ENCODE measurements at regions of chr16 and their contacts with region 1.

Region 1: DNA sequence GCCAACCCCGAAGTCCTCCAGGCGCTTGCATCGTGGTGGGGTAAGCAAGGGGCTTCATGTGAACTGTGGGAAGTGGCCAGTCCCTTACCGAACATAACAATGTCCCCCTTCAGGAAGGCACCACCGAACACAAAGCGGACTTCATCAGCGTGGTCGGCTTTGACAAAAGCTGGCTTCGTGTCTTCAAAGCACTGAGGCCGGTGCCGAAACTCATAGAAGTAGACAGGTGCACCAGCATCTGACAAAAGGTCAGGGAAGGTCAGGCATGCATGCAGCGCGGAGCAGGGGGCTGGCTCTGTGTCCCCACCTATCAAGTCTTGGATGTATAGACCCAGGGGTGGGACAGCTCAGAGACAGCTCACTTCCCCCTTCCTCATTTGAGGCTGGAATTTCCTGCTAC is 16.6 kb upstream of the CES1 start:
- DNase-seq: no peak
- ATAC-seq: no peak
- H3K4me3 ChIP-seq: no peak overlapping the region
- H3K27ac ChIP-seq: no peak overlapping the region
- H3K4me1 ChIP-seq: no peaks in the 10 kb centered on the region
- H3K27me3 ChIP-seq: no peaks in the 10 kb centered on the region
- CTCF ChIP-seq: no peak

Region 2: DNA sequence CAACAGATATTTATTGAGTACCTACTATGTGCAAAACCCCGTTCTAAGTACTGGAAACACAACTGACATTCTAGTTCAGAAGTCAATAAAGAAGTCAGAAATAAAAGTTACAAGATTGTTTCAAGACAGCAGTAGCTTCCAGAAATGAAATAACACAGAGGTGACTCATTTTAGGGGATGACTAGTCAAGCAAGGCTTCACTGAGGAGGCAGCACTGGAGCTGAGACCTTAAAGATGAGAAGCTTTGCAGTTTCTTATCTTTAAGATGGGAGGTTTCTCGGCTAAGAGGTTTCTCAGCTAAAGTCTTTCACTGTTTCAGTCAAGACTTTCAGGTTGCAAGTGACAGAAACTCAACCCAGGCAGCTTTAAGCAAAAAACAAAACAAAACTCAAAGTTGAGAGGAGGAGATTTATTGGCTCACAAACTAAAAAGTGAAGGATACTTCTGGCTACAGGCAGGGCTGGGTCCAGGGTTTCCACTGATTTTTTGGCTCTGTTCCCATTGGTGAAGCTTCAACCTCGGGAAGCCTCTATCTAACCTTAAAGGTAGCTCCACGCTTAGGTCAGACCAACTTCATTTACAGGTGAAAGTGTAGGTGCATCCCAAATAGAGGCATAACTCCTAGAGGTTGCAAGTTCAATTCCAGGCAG is 378.0 kb before region 1 on chr16:
- CTCF ChIA-PET with region 1: no interaction called
- POLR2A ChIA-PET with region 1: no interaction called
- in situ Hi-C with region 1: no loop called
- intact Hi-C with region 1: loop called (anchors 5 kb)
- DNase-seq: no peak
- ATAC-seq: peak; percentile 70
- H3K4me3 ChIP-seq: no peak overlapping the region
- H3K27ac ChIP-seq: peak overlapping the region; percentile 91
- H3K4me1 ChIP-seq: peaks cover 45% of the 10 kb centered on the region
- H3K27me3 ChIP-seq: no peaks in the 10 kb centered on the region
- CTCF ChIP-seq: no peak

Region 3: DNA sequence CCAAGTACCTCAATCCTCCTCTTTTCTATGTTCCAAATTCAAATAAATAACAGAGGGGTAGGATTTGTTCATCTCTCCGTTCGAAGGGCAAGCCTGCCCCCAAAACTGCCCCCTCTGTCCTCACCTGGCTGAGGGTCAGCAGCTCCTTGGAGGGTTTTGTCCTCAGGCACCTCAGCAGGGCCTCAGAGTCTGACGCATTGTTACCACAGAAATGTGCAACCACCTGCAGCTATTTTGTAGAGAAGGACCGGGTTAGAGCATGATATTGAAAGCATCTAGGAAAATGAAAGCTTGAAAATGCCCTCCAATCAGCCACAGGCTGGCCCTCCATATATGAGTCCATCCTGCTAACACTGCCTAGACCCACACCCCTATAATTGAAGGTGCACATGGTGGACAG is 11.8 kb after region 1 on chr16:
- CTCF ChIA-PET with region 1: no interaction called
- POLR2A ChIA-PET with region 1: no interaction called
- in situ Hi-C with region 1: no loop called
- intact Hi-C with region 1: no loop called
- DNase-seq: no peak
- ATAC-seq: no peak
- H3K4me3 ChIP-seq: no peak overlapping the region
- H3K27ac ChIP-seq: no peak overlapping the region
- H3K4me1 ChIP-seq: no peaks in the 10 kb centered on the region
- H3K27me3 ChIP-seq: no peaks in the 10 kb centered on the region
- CTCF ChIP-seq: no peak